ENCODE measurements at regions of chr1 and their contacts with region 1.

Region 1: DNA sequence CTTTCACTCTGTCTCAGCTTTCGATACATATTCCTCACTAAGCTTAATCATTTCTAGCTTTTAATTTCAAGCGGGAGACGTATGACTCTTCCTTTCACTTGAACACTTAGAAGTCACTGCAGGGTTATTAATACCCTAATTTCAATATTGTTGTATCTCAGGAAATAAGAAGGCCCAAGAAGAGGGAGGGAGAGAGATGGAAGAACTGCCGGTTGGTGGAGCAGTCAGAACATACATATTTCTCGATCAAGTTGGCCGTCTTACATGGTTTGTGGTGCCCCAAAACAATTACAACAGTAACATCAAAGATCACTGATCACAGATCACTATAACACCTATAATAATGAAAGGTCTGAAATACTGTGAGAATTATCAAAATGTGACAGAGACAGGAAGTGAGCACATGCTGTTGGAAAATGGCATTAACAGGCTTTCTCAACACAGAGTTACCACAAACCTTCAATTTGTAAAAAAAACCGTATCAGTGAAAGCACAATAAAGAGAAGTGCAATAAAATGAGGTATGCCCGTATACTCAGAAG is 145.4 kb upstream of the HP1BP3 start:
- DNase-seq: peak; percentile 72
- H3K4me3 Mint-ChIP-seq: no peak overlapping the region
- H3K27ac Mint-ChIP-seq: peak overlapping the region; percentile 79
- H3K4me1 Mint-ChIP-seq: peaks cover 36% of the 10 kb centered on the region
- H3K27me3 Mint-ChIP-seq: no peaks in the 10 kb centered on the region

Region 2: GRCh38 chr1:20185834-20186782 is 746.4 kb before region 1 on chr1 and contains the starts of genes PLA2G2C and UBXN10:
- CTCF ChIA-PET with region 1: no interaction called
- intact Hi-C with region 1: loop called (anchors 5 kb)
- DNase-seq: peak; percentile 94
- H3K4me3 Mint-ChIP-seq: peak within 1 kb of the TSS; percentile 62
- H3K27ac Mint-ChIP-seq: peak within 1 kb of the TSS; percentile 82
- H3K4me1 Mint-ChIP-seq: peaks cover 41% of the 10 kb centered on the region
- H3K27me3 Mint-ChIP-seq: no peaks in the 10 kb centered on the region
- total RNA-seq, gene PLA2G2C: 0.94 to 0.95 TPM
- total RNA-seq, gene UBXN10: 0.27 to 0.33 TPM

Region 3: DNA sequence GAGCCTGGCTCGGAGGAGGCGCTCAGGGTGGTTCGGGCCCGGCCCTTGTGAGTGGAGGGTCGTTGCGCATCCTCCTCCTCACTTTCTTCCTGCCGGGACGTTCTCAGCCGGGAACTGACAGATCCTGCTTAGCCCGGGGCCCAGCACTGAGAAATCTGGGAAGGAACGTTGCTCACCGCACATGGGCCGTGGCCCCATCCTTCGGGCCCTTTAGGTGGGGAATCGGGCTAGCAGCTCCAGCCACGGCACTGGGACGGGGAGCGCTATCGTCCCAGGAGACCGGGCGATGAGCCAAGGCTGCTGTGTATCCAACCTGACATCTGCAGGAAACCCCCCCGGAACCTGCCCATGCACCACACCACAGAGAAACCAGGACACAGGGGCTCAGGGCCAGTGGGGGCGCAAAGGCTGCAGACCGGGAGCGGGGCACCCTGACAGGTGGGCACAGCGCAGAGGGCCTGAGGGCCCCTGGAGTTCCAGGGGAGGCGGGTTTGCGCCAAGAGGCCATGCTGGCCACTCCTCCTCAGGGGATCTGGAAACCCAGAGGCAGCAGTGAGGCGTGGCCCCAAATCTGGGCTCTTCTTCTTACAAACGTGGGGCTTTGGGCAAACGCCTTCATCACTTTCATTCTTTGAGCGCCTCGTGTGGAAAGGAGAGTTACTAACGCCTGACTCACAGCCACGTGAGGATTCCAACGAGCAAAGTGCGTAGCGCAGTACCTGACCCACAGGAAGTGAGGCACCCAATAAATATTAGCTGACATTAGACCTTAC is 199.7 kb before region 1 on chr1 and contains the start of gene SH2D5:
- CTCF ChIA-PET with region 1: no interaction called
- intact Hi-C with region 1: loop called (anchors 1 kb)
- DNase-seq: peak; percentile 88
- H3K4me3 Mint-ChIP-seq: peak within 1 kb of the TSS; percentile 79
- H3K27ac Mint-ChIP-seq: no peak within 1 kb of the TSS
- H3K4me1 Mint-ChIP-seq: peaks cover 10% of the 10 kb centered on the region
- H3K27me3 Mint-ChIP-seq: peaks cover 32% of the 10 kb centered on the region
- total RNA-seq, gene SH2D5: 0.15 to 0.29 TPM

Region 4: DNA sequence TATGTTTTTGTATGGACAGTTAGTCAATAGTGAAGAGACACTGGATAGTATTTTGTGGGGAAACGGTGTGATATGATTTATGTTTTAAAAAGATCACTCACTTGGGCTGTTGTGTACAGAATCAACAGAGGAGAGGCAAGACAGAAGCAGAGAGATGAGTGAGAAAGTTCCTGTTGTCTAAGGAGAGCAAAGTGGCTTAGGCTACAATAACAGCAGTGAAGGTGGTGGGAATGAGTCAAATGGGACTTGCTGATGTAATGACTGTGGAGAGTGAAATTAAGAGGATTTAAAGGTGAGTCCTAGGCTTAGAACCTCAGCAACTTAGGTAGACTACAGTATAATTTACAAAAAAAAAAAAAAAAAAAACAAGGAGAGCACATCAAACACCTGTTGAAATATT is 23.8 kb after region 1 on chr1:
- CTCF ChIA-PET with region 1: no interaction called
- intact Hi-C with region 1: loop called (anchors 2 kb)
- DNase-seq: no peak
- H3K4me3 Mint-ChIP-seq: no peak overlapping the region
- H3K27ac Mint-ChIP-seq: no peak overlapping the region
- H3K4me1 Mint-ChIP-seq: peaks cover 4% of the 10 kb centered on the region
- H3K27me3 Mint-ChIP-seq: no peaks in the 10 kb centered on the region

Region 5: GRCh38 chr1:21022279-21023040 is 90.0 kb after region 1 on chr1:
- CTCF ChIA-PET with region 1: no interaction called
- intact Hi-C with region 1: loop called (anchors 1 kb)
- DNase-seq: peak; percentile 60
- H3K4me3 Mint-ChIP-seq: peak overlapping the region; percentile 22
- H3K27ac Mint-ChIP-seq: peak overlapping the region; percentile 81
- H3K4me1 Mint-ChIP-seq: peaks cover 16% of the 10 kb centered on the region
- H3K27me3 Mint-ChIP-seq: no peaks in the 10 kb centered on the region

Region 6: GRCh38 chr1:21324368-21325141 is 392.0 kb after region 1 on chr1:
- CTCF ChIA-PET with region 1: no interaction called
- intact Hi-C with region 1: loop called (anchors 1 kb)
- DNase-seq: peak; percentile 89
- H3K4me3 Mint-ChIP-seq: peak overlapping the region; percentile 63
- H3K27ac Mint-ChIP-seq: peak overlapping the region; percentile 97
- H3K4me1 Mint-ChIP-seq: peaks cover 90% of the 10 kb centered on the region
- H3K27me3 Mint-ChIP-seq: no peaks in the 10 kb centered on the region

Measured in activated naive CD4-positive, alpha-beta T cell treated with anti-CD3 and anti-CD28 coated beads for 36 hours (primary cell).